ENCODE measurements at regions of chr7 and their contacts with region 1.

Region 1: DNA sequence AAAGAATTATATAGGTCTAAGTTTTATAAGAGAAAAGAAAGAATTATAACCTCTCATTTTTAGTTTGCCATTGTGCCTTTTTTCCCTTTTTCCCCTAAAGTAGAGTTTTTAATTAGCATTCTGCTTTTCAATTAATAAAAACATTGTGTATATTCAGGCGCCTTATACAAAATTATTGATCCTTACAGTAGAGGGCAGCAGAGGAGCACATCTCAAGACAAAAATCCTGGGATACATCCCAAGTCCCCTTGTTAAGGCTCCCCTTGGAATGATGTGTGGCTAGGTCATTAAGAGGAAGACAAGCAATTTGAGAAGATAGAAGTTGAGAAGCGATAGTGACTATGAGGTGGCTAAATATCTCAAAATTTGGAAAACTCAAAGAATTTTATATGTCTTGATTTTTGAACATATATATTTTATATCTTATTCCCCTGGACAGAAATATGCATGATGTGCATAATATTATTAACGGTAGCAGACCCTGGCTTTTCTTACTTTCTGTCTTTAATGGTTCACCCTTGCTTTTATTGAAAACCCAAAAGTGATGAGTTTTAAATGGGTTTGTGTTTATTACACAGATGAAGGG is 19.1 kb upstream of the TPK1 start:
- DNase-seq: peak in 2 of 14 experiments; percentile 20 to 22
- ATAC-seq: no peak
- H3K4me3 ChIP-seq: no peak overlapping the region
- H3K4me3 Mint-ChIP-seq: no peak overlapping the region
- H3K27ac ChIP-seq: no peak overlapping the region
- H3K27ac Mint-ChIP-seq: no peak overlapping the region
- H3K4me1 ChIP-seq: no peaks in the 10 kb centered on the region
- H3K4me1 Mint-ChIP-seq: peaks cover 4% of the 10 kb centered on the region
- H3K27me3 ChIP-seq: no peaks in the 10 kb centered on the region
- H3K27me3 Mint-ChIP-seq: no peaks in the 10 kb centered on the region
- CTCF ChIP-seq: peak; percentile 71

Region 2: GRCh38 chr7:144903201-144903600 is 48.3 kb after region 1 on chr7:
- CTCF ChIA-PET with region 1: no interaction called
- POLR2A ChIA-PET with region 1: no interaction called
- intact Hi-C with region 1: loop called in 1 of 2 experiments (anchors 5 kb)
- DNase-seq: no peak
- ATAC-seq: no peak
- H3K4me3 ChIP-seq: no peak overlapping the region
- H3K4me3 Mint-ChIP-seq: no peak overlapping the region
- H3K27ac ChIP-seq: no peak overlapping the region
- H3K27ac Mint-ChIP-seq: no peak overlapping the region
- H3K4me1 ChIP-seq: no peaks in the 10 kb centered on the region
- H3K4me1 Mint-ChIP-seq: peaks cover 6% of the 10 kb centered on the region
- H3K27me3 ChIP-seq: no peaks in the 10 kb centered on the region
- H3K27me3 Mint-ChIP-seq: peaks cover 4% of the 10 kb centered on the region
- CTCF ChIP-seq: no peak

Measured in CD4-positive, alpha-beta T cell (primary cell).